ENCODE measurements at regions of chr4 and their contacts with region 1.

Region 1: GRCh38 chr4:25312496-25313200 is at the start of gene ZCCHC4:
- DNase-seq: peak; percentile 90
- H3K4me3 Mint-ChIP-seq: peak within 1 kb of the TSS; percentile 99
- H3K27ac Mint-ChIP-seq: peak within 1 kb of the TSS; percentile 99
- H3K4me1 Mint-ChIP-seq: no peaks in the 10 kb centered on the region
- H3K27me3 Mint-ChIP-seq: no peaks in the 10 kb centered on the region
- CTCF ChIP-seq: peak; percentile 92
- total RNA-seq, gene ZCCHC4: 7.7 and 9.7 TPM in 2 replicates

Region 2: GRCh38 chr4:25180524-25181131 is 132.0 kb before region 1 on chr4:
- CTCF ChIA-PET with region 1: interaction called, 10 read pairs
- POLR2A ChIA-PET with region 1: no interaction called
- intact Hi-C with region 1: loop called (anchors 2 kb)
- DNase-seq: peak; percentile 64
- H3K4me3 Mint-ChIP-seq: no peak overlapping the region
- H3K27ac Mint-ChIP-seq: no peak overlapping the region
- H3K4me1 Mint-ChIP-seq: no peaks in the 10 kb centered on the region
- H3K27me3 Mint-ChIP-seq: no peaks in the 10 kb centered on the region
- CTCF ChIP-seq: peak; percentile 62

Region 3: DNA sequence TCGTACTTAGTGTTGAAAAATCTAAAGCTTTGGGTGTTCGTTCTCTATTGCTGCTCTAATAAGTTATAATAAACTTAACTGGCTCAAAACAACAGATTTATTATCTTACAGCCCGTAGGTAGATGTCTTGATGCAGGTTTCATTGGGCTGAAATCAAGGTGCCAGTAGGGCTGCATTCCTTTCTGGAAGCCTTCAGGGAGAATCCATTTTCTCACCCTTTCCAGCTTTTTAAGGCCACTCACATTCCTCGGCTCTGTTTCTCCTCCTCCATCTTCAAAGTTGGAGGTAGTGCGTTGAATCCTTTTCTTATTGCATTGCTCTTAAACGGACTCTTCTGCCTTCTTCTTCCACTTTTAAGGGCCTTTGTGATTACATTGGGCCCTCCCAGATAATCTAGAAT is 30.6 kb before region 1 on chr4:
- CTCF ChIA-PET with region 1: interaction called, 13 read pairs
- POLR2A ChIA-PET with region 1: no interaction called
- intact Hi-C with region 1: no loop called
- DNase-seq: no peak
- H3K4me3 Mint-ChIP-seq: no peak overlapping the region
- H3K27ac Mint-ChIP-seq: no peak overlapping the region
- H3K4me1 Mint-ChIP-seq: no peaks in the 10 kb centered on the region
- H3K27me3 Mint-ChIP-seq: no peaks in the 10 kb centered on the region
- CTCF ChIP-seq: no peak

Region 4: GRCh38 chr4:25299480-25300188 is 13.0 kb before region 1 on chr4:
- CTCF ChIA-PET with region 1: interaction called, 22 read pairs
- POLR2A ChIA-PET with region 1: interaction called, 5 read pairs
- intact Hi-C with region 1: no loop called
- DNase-seq: no peak
- H3K4me3 Mint-ChIP-seq: no peak overlapping the region
- H3K27ac Mint-ChIP-seq: no peak overlapping the region
- H3K4me1 Mint-ChIP-seq: no peaks in the 10 kb centered on the region
- H3K27me3 Mint-ChIP-seq: peaks cover 11% of the 10 kb centered on the region
- CTCF ChIP-seq: no peak

Region 5: DNA sequence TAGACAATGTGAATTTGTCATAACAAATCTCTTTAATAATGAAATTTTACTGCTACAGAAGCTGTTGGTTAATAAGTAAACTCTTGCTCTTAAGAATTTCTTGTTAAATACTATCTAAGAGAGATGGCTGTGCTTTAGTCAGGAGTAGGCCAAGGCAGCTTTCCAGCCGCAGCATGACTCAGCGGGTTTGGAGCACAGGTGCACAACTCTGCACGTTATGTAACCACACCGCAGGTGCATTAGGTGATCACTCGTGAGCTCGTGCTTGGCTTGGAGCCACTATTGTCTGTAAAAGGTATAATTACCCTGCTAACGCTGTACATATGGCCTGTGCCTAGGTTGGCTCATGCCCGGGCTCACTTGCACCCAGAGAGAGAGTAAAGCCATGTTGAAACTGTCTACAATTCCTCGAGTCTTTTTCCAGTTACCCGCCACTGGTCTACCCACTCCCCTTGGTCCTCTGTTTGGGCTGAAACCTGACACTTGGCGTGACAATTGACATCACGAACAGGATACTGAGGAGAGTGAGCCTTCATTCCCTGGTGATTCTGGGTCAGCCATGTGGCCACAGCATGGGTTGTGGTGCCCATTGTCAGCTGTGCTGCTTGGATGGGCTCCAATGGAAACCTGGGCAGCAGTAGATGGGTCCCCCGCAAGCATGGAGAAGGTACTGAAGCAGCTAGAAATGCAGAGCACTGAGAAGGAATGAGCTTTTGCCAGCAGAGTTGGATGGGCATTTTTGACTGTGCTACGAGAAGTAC is 46.0 kb after region 1 on chr4:
- CTCF ChIA-PET with region 1: interaction called, 15 read pairs
- POLR2A ChIA-PET with region 1: interaction called, 6 read pairs
- intact Hi-C with region 1: no loop called
- DNase-seq: peak; percentile 88
- H3K4me3 Mint-ChIP-seq: no peak overlapping the region
- H3K27ac Mint-ChIP-seq: no peak overlapping the region
- H3K4me1 Mint-ChIP-seq: no peaks in the 10 kb centered on the region
- H3K27me3 Mint-ChIP-seq: no peaks in the 10 kb centered on the region
- CTCF ChIP-seq: no peak

Measured in MCF 10A (cell line).